Breast epithelium (tissue), 4 donors: ENCODE measurements at regions of chr7 and their contacts with region 1.

Region 1: GRCh38 chr7:90945104-90945787 is 319.0 kb upstream of the FZD1 start:
- DNase-seq: no peak
- H3K4me3 ChIP-seq: no peak overlapping the region
- H3K27ac ChIP-seq: peak overlapping the region; percentile 40 to 51
- H3K4me1 ChIP-seq: no peaks in the 10 kb centered on the region
- H3K27me3 ChIP-seq: no peaks in the 10 kb centered on the region
- CTCF ChIP-seq: no peak
- POLR2A ChIP-seq: no peak

Region 2: DNA sequence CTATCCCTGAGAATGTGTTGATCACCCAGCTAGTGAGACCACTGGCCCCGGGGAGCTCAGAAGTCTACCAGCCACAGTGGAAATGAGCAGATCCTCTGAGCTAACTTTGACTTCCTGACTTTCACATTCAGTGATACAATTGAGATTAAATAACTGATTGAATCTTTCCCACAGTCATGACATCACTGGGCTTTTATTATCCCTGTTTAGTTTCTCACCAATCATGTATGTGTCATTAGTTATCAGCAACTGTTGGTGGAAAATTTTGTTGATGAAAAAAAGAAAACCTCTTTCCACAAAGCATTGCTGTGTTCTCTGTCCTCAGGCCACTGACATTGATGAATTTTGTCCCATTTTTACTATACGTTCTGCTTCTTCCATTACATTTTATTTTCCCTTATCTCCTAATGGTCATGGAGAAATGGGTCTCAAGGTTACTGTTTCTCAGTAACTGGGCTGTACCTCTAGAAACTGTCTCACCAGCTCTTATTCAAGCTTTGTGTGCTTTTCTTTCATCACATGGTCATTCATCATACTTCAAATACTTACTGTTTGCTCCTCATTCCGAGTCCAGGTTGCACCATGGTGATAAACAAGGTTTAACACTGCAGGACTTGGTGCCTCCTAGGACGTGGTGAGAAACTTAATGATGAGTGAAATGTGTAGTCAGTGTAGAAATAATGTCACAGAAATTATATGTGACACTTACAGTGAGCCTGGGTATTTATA is 44.5 kb before region 1 on chr7:
- intact Hi-C with region 1: loop called (anchors 5 kb)
- DNase-seq: no peak
- H3K4me3 ChIP-seq: no peak overlapping the region
- H3K27ac ChIP-seq: no peak overlapping the region
- H3K4me1 ChIP-seq: no peaks in the 10 kb centered on the region
- H3K27me3 ChIP-seq: no peaks in the 10 kb centered on the region
- CTCF ChIP-seq: no peak
- POLR2A ChIP-seq: no peak

Region 3: GRCh38 chr7:92002720-92003119 is 1057.5 kb after region 1 on chr7:
- intact Hi-C with region 1: loop called (anchors 10 kb)
- DNase-seq: no peak
- H3K4me3 ChIP-seq: no peak overlapping the region
- H3K27ac ChIP-seq: no peak overlapping the region
- H3K4me1 ChIP-seq: no peaks in the 10 kb centered on the region
- H3K27me3 ChIP-seq: no peaks in the 10 kb centered on the region
- CTCF ChIP-seq: no peak
- POLR2A ChIP-seq: no peak